Naive thymus-derived CD4-positive, alpha-beta T cell (primary cell): ENCODE measurements at regions of chr5 and their contacts with region 1.

Region 1: GRCh38 chr5:122999945-123000563 is 36.5 kb downstream of the PPIC start:
- DNase-seq: peak in 4 of 9 donors; percentile 0 to 21 (median 4)
- ATAC-seq: peak; percentile 54
- H3K4me3 ChIP-seq: no peak overlapping the region
- H3K4me3 Mint-ChIP-seq: no peak overlapping the region
- H3K27ac ChIP-seq: no peak overlapping the region
- H3K27ac Mint-ChIP-seq: no peak overlapping the region
- H3K4me1 ChIP-seq: no peaks in the 10 kb centered on the region
- H3K4me1 Mint-ChIP-seq: no peaks in the 10 kb centered on the region
- H3K27me3 ChIP-seq: no peaks in the 10 kb centered on the region
- H3K27me3 Mint-ChIP-seq: peaks cover 0 to 4% (median 0%) of the 10 kb centered on the region in 5 donors

Region 2: GRCh38 chr5:122192497-122193496 is 807.3 kb before region 1 on chr5:
- CTCF ChIA-PET with region 1: no interaction called
- POLR2A ChIA-PET with region 1: no interaction called
- intact Hi-C with region 1: loop called in 1 of 2 experiments (anchors 10 kb)
- DNase-seq: peak in 4 of 9 donors; percentile 2 to 11 (median 4)
- ATAC-seq: peak; percentile 63
- H3K4me3 ChIP-seq: no peak overlapping the region
- H3K4me3 Mint-ChIP-seq: no peak overlapping the region
- H3K27ac ChIP-seq: no peak overlapping the region
- H3K27ac Mint-ChIP-seq: no peak overlapping the region
- H3K4me1 ChIP-seq: no peaks in the 10 kb centered on the region
- H3K4me1 Mint-ChIP-seq: no peaks in the 10 kb centered on the region
- H3K27me3 ChIP-seq: no peaks in the 10 kb centered on the region
- H3K27me3 Mint-ChIP-seq: peaks cover 3 to 46% (median 29%) of the 10 kb centered on the region in 5 donors

Region 3: GRCh38 chr5:122500245-122501075 is 499.6 kb before region 1 on chr5:
- CTCF ChIA-PET with region 1: no interaction called
- POLR2A ChIA-PET with region 1: no interaction called
- intact Hi-C with region 1: loop called in 1 of 2 experiments (anchors 5 kb)
- DNase-seq: no peak
- ATAC-seq: no peak
- H3K4me3 ChIP-seq: no peak overlapping the region
- H3K4me3 Mint-ChIP-seq: no peak overlapping the region
- H3K27ac ChIP-seq: no peak overlapping the region
- H3K27ac Mint-ChIP-seq: no peak overlapping the region
- H3K4me1 ChIP-seq: no peaks in the 10 kb centered on the region
- H3K4me1 Mint-ChIP-seq: no peaks in the 10 kb centered on the region
- H3K27me3 ChIP-seq: no peaks in the 10 kb centered on the region
- H3K27me3 Mint-ChIP-seq: peaks cover 0 to 20% (median 7%) of the 10 kb centered on the region in 5 donors

Region 4: GRCh38 chr5:122704243-122705036 is 295.6 kb before region 1 on chr5:
- CTCF ChIA-PET with region 1: interaction called, 3 read pairs
- POLR2A ChIA-PET with region 1: no interaction called
- intact Hi-C with region 1: loop called in 1 of 2 experiments (anchors 10 kb)
- DNase-seq: peak in 5 of 9 donors; percentile 4 to 13 (median 7)
- ATAC-seq: peak; percentile 41
- H3K4me3 ChIP-seq: no peak overlapping the region
- H3K4me3 Mint-ChIP-seq: no peak overlapping the region
- H3K27ac ChIP-seq: no peak overlapping the region
- H3K27ac Mint-ChIP-seq: no peak overlapping the region
- H3K4me1 ChIP-seq: no peaks in the 10 kb centered on the region
- H3K4me1 Mint-ChIP-seq: no peaks in the 10 kb centered on the region
- H3K27me3 ChIP-seq: no peaks in the 10 kb centered on the region
- H3K27me3 Mint-ChIP-seq: peaks cover 0 to 13% (median 5%) of the 10 kb centered on the region in 5 donors

Region 5: GRCh38 chr5:123344816-123345426 is 344.9 kb after region 1 on chr5:
- CTCF ChIA-PET with region 1: no interaction called
- POLR2A ChIA-PET with region 1: no interaction called
- intact Hi-C with region 1: no loop called
- DNase-seq: no peak
- ATAC-seq: no peak
- H3K4me3 ChIP-seq: no peak overlapping the region
- H3K4me3 Mint-ChIP-seq: no peak overlapping the region
- H3K27ac ChIP-seq: no peak overlapping the region
- H3K27ac Mint-ChIP-seq: no peak overlapping the region
- H3K4me1 ChIP-seq: no peaks in the 10 kb centered on the region
- H3K4me1 Mint-ChIP-seq: no peaks in the 10 kb centered on the region
- H3K27me3 ChIP-seq: no peaks in the 10 kb centered on the region
- H3K27me3 Mint-ChIP-seq: peaks cover 0 to 3% (median 0%) of the 10 kb centered on the region in 5 donors